Right lobe of liver (tissue), 6 donors: ENCODE measurements at regions of chr4 and their contacts with region 1.

Region 1: DNA sequence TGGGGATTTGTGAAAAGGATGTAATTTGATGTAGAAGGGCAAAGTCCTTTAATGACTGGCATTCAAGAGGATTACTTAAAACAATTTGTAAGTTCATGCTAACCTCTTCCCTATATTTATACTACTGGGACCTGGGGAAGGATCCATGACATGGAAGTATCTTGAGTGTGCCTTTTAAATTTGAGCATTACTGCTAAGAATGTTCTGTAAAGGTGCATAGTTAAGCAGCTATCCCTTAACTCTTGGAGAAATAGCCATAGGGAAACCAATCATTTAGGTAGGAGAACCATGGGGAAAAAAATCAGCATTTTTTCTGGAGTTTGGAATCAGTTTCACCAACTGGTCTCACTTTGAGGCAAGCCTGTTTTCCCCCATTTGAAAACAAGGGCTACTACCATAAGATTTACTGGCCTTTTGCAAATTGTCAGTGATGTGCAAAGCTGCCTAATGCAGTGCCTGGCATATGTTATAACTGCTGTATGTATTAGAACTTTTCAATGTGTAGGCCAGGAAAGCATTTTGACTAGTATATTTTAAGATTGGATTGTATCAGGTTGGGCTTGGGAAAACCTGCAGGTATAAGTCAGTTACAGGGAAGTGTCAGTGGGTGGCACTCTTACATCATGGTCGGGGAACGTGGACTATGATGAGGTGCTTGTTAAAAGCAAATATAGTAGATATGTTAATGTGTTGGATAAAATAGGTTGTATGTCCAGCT is 72.1 kb downstream of the PRSS12 start:
- DNase-seq: peak in 1 of 3 donors; percentile 49
- ATAC-seq: peak; percentile 23 to 44 (median 29)
- H3K4me3 ChIP-seq: peak overlapping the region in 2 of 3 donors; percentile 75 to 81
- H3K27ac ChIP-seq: peak overlapping the region in 2 of 3 donors; percentile 17 to 42
- H3K4me1 ChIP-seq: peaks cover 0 to 38% (median 8%) of the 10 kb centered on the region in 4 donors
- H3K27me3 ChIP-seq: no peaks in the 10 kb centered on the region
- CTCF ChIP-seq: peak; percentile 28 to 63 (median 59)
- POLR2A ChIP-seq: no peak

Region 2: DNA sequence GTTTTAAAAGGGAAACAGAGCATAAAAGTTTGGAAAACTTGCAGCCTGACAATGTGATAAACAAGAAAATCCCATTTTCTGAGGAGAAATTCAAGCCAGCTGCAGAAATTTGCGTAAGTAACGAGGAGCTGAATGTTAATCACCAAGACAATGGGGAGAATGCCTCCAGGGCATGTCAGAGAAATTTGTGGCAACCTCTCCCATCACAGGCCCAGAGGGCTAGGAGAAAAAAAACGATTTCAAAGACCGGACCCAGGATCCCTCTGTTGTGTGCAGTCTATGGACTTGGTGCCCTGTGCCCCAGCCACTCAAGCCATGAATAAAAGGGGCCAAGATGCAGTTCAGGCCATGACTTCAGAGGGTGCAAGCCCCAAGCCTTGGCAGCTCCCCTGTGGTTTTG is 601.8 kb before region 1 on chr4:
- intact Hi-C with region 1: no loop called
- DNase-seq: no peak
- ATAC-seq: no peak
- H3K4me3 ChIP-seq: no peak overlapping the region
- H3K27ac ChIP-seq: no peak overlapping the region
- H3K4me1 ChIP-seq: no peaks in the 10 kb centered on the region
- H3K27me3 ChIP-seq: no peaks in the 10 kb centered on the region
- CTCF ChIP-seq: no peak
- POLR2A ChIP-seq: no peak

Region 3: DNA sequence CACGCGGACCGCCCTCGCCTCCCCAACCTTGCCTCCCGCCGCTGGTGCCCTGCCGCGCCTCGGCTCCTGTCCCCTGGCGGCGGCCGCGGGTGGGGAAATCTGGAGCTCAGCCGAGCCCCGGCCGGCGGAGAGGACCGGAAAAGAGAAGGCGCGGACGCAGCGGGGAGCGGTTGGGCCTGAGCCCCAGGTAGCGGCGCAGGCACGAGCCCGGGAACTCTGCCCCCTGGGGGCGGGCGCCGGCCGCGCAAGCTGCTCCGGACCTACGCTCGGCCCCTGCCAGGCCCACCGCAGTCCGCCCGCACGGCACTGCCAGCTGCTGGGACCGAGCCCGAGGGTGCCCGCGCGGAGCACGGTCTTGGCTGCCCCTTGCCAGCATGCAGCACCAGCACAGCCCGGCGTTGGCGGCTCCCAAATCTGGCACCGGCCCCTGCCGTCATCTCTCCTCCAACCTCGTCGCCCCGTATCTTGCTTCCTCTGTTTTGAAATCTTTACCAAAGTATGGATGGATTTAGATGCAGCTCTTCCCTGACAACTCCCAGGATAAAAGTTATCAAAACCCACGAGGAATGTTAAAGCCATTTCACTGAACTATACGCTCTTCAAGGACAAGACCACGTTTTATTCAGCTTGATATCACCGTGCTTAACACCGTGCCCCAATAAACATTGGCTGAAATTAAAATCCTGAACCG is 72.3 kb after region 1 on chr4 and contains the start of gene PRSS12:
- intact Hi-C with region 1: loop called in 1 of 2 experiments (anchors 10 kb)
- DNase-seq: peak; percentile 68 to 72 (median 70)
- ATAC-seq: peak; percentile 95 to 98 (median 96)
- H3K4me3 ChIP-seq: peak within 1 kb of the TSS; percentile 44 to 55 (median 53)
- H3K27ac ChIP-seq: no peak within 1 kb of the TSS
- H3K4me1 ChIP-seq: peaks cover 0 to 15% (median 4%) of the 10 kb centered on the region in 4 donors
- H3K27me3 ChIP-seq: peaks cover 0 to 4% of the 10 kb centered on the region in 2 donors
- CTCF ChIP-seq: peak; percentile 72 to 83 (median 76)
- POLR2A ChIP-seq: peak; percentile 14
- total RNA-seq, gene PRSS12: 0.12 to 1.4 (median 0.74) TPM

Region 4: GRCh38 chr4:118716304-118716703 is 435.6 kb after region 1 on chr4:
- intact Hi-C with region 1: no loop called
- DNase-seq: no peak
- ATAC-seq: peak in 1 of 4 donors; percentile 34
- H3K4me3 ChIP-seq: no peak overlapping the region
- H3K27ac ChIP-seq: no peak overlapping the region
- H3K4me1 ChIP-seq: no peaks in the 10 kb centered on the region
- H3K27me3 ChIP-seq: no peaks in the 10 kb centered on the region
- CTCF ChIP-seq: no peak
- POLR2A ChIP-seq: no peak